RWPE1 (cell line): ENCODE measurements at regions of chr1 and their contacts with region 1.

Region 1: GRCh38 chr1:202264300-202264699 is 70.7 kb downstream of the LGR6 start:
- DNase-seq: no peak
- H3K27ac ChIP-seq: no peak overlapping the region
- CTCF ChIP-seq: no peak

Region 2: GRCh38 chr1:202274611-202275010 is 10.3 kb after region 1 on chr1:
- CTCF ChIA-PET with region 1: interaction called, 11 read pairs
- POLR2A ChIA-PET with region 1: no interaction called
- DNase-seq: no peak
- H3K27ac ChIP-seq: no peak overlapping the region
- CTCF ChIP-seq: no peak

Region 3: GRCh38 chr1:202397256-202397655 is 133.0 kb after region 1 on chr1:
- CTCF ChIA-PET with region 1: no interaction called
- POLR2A ChIA-PET with region 1: no interaction called
- DNase-seq: no peak
- H3K27ac ChIP-seq: no peak overlapping the region
- CTCF ChIP-seq: no peak